ENCODE measurements at regions of chr2 and their contacts with region 1.

Region 1: GRCh38 chr2:54522624-54523281 is 66.6 kb downstream of the SPTBN1 start:
- DNase-seq: peak; percentile 65 to 74 (median 70)
- ATAC-seq: peak; percentile 93
- H3K4me3 ChIP-seq: no peak overlapping the region
- H3K27ac ChIP-seq: peak overlapping the region in 2 of 4 donors; percentile 5 to 7
- H3K4me1 ChIP-seq: peaks cover 16% of the 10 kb centered on the region
- H3K27me3 ChIP-seq: no peaks in the 10 kb centered on the region
- CTCF ChIP-seq: peak; percentile 39 to 85 (median 80)
- POLR2A ChIP-seq: no peak

Region 2: DNA sequence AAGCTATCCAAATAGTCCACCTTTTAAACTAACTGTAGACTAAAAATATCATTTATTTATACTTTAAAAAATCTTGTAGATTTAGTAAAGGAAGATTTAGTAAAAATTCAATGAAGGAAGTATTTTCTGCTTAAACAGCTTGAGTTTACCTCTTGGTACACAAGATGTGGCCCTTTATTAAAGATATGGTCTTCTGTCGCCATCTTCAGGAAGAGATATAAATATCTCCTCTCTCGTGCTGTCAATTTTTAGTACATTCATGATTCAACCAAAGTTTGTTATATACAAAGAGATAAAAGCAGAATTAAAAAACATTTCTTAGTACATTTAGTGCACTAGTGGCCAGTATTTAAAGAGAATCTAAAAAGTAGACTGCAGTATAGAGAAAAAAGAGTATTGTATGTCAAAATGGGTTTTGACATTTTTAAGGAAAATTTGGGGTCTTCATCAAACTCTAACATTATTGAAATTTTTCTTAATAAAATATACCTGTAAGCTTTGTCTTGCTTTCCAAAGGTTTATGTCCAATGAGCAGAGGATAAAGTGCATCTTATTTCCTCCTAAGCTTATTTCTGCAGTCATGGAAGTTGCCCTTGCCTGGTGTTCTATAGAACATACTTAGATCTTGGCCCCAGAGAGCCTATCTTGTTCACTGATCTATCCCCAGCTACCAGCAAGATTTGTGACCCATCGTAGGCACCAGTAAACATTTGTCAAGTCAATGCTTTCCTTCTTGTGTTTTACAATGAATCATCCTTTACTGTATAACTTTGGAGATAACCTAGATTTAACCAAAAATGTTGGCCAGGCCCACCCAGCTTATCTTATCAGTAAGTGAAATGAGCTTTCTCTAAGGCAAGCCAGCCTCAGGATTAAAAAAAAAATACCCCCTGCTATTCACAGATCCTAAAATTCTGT is 182.2 kb after region 1 on chr2:
- intact Hi-C with region 1: loop called (anchors 5 kb)
- DNase-seq: no peak
- ATAC-seq: no peak
- H3K4me3 ChIP-seq: no peak overlapping the region
- H3K27ac ChIP-seq: no peak overlapping the region
- H3K4me1 ChIP-seq: peaks cover 7% of the 10 kb centered on the region
- H3K27me3 ChIP-seq: no peaks in the 10 kb centered on the region
- CTCF ChIP-seq: peak; percentile 19 to 87 (median 72)
- POLR2A ChIP-seq: no peak